Ovary (tissue), 10 donors: ENCODE measurements at regions of chr4 and their contacts with region 1.

Region 1: GRCh38 chr4:174631901-174632758 is 109.8 kb upstream of the HPGD start:
- DNase-seq: no peak
- H3K4me3 ChIP-seq: no peak overlapping the region
- H3K27ac ChIP-seq: no peak overlapping the region
- H3K4me1 ChIP-seq: no peaks in the 10 kb centered on the region
- H3K27me3 ChIP-seq: no peaks in the 10 kb centered on the region
- CTCF ChIP-seq: no peak
- EP300 ChIP-seq: no peak
- POLR2A ChIP-seq: no peak

Region 2: GRCh38 chr4:174365018-174365587 is 267.0 kb before region 1 on chr4:
- intact Hi-C with region 1: loop called in 1 of 4 experiments (anchors 10 kb)
- DNase-seq: no peak
- H3K4me3 ChIP-seq: no peak overlapping the region
- H3K27ac ChIP-seq: no peak overlapping the region
- H3K4me1 ChIP-seq: no peaks in the 10 kb centered on the region
- H3K27me3 ChIP-seq: no peaks in the 10 kb centered on the region
- CTCF ChIP-seq: no peak
- EP300 ChIP-seq: no peak
- POLR2A ChIP-seq: no peak